HCT116 (cell line): ENCODE measurements at regions of chr12 and their contacts with region 1.

Region 1: DNA sequence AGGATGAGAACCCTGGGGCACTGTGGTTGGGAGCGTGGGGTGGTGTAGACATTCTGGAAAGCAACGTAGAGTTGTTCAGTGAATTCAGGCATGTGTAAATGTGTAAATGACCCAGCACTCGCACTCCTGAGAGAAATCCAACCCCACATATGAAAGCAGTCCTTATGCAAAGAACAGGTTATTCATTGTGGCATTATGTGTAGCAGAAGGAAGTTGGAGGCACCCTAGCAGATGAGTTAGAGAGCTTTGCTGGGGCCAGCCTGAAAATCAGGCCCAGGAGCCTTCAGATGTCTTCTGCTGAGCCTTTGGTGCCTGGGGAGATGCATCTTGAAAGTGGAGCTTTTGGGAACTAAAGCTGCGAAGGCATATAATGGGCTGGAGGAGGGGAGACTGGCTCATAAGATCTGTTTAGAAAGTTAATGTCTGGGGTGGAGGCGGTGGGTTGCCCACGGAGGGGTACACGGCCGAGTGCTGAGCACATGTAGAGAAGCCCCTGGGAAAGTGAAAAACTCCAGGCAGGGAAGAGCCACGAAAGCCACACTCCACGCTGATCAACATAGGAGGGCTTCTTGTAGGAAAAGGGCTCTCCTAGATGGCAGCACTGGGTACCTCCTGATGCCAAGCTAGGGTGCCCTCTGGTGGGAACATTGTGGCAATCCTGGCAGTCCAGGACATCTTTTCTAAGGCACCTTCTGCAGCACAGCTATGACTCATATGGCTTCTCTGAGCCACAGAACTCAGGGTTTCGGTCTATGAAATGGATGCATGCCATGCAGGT is 6.0 kb upstream of the KRT83 start:
- DNase-seq: peak; percentile 96
- ATAC-seq: peak; percentile 99
- H3K4me3 ChIP-seq: no peak overlapping the region; a peak in 1 of 4 replicates
- H3K27ac ChIP-seq: no peak overlapping the region
- H3K4me1 ChIP-seq: peaks cover 0 to 15% of the 10 kb centered on the region in 2 experiments; a peak in 2 of 4 replicates
- H3K27me3 ChIP-seq: no peaks in the 10 kb centered on the region; the same call in 1 of the 2 replicates
- CTCF ChIP-seq: peak; percentile 97 to 100 (median 99)
- POLR2A ChIP-seq: no peak
- RAD21 ChIP-seq: peak; percentile 97

Region 2: GRCh38 chr12:52147367-52147972 is 179.8 kb before region 1 on chr12:
- CTCF ChIA-PET with region 1: interaction called, 19 read pairs
- POLR2A ChIA-PET with region 1: interaction called, 15 read pairs
- RAD21 ChIA-PET with region 1: interaction called, 3 to 5 read pairs
- intact Hi-C with region 1: no loop called
- DNase-seq: peak; percentile 99
- ATAC-seq: peak; percentile 61
- H3K4me3 ChIP-seq: peak overlapping the region; percentile 46 to 55
- H3K27ac ChIP-seq: peak overlapping the region; percentile 100
- H3K4me1 ChIP-seq: peaks cover 83 to 99% of the 10 kb centered on the region in 2 experiments
- H3K27me3 ChIP-seq: no peaks in the 10 kb centered on the region
- CTCF ChIP-seq: no peak
- POLR2A ChIP-seq: no peak
- RAD21 ChIP-seq: no peak

Region 3: DNA sequence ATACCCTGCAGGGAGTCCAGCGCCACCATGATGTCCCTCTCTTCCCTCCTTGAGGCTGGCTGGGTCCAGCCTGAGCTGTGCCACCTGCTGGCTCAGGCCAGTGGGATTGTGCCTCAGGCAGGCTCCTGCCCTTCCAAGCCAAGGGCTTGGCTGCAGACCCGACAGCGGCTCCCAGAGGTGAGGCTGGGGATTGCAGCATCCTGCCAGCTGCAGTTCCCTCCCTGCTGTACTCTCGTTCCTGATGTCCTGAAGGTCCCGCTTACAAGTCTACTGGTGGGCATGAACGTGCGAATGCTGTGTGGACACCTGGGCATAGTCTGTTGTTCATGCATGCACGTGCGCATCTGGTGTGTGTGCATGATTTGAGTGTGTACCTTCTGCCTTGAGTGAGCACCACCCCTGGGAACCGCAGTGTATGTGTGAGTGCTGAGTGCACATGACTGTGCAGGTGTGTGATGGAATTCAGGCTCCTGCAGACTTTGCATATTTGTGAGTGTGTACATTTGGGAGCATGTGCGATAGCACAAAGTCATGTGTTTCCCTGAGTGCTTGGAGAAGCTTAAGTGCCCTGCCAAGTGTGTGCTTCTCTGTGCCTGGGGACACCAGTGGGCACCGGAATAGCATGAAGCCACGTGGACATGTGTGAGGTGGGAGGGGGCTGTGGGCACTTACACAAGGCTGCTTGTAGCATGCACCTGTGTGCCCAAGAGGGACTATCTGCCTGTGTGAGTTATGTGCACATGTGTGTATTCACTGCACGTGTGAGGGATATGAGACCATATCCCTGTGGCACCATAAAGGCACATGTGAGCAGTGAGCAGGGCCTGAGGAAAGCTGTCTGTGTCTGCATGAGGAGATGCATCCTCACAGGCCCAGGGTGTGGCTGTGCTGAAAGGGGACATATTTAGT is 113.5 kb before region 1 on chr12:
- CTCF ChIA-PET with region 1: interaction called, 8 read pairs
- POLR2A ChIA-PET with region 1: no interaction called
- RAD21 ChIA-PET with region 1: interaction called, 3 to 7 read pairs
- intact Hi-C with region 1: loop called (anchors 2 kb)
- DNase-seq: peak; percentile 82
- ATAC-seq: peak; percentile 80
- H3K4me3 ChIP-seq: no peak overlapping the region
- H3K27ac ChIP-seq: no peak overlapping the region
- H3K4me1 ChIP-seq: peaks cover 51 to 77% of the 10 kb centered on the region in 2 experiments
- H3K27me3 ChIP-seq: peaks cover 3% of the 10 kb centered on the region
- CTCF ChIP-seq: peak in 2 of 3 experiments; percentile 99 to 100; a peak in 4 of 6 replicates
- POLR2A ChIP-seq: no peak
- RAD21 ChIP-seq: no peak

Region 4: GRCh38 chr12:52278541-52279421 is 48.5 kb before region 1 on chr12:
- CTCF ChIA-PET with region 1: interaction called, 22 read pairs
- POLR2A ChIA-PET with region 1: interaction called, 6 read pairs
- RAD21 ChIA-PET with region 1: interaction called, 3 to 9 read pairs
- intact Hi-C with region 1: loop called (anchors 1 kb)
- DNase-seq: peak; percentile 57
- ATAC-seq: peak; percentile 81
- H3K4me3 ChIP-seq: peak overlapping the region; percentile 34 to 50
- H3K27ac ChIP-seq: peak overlapping the region; percentile 73
- H3K4me1 ChIP-seq: peaks cover 41 to 65% of the 10 kb centered on the region in 2 experiments
- H3K27me3 ChIP-seq: no peaks in the 10 kb centered on the region
- CTCF ChIP-seq: peak in 2 of 3 experiments; percentile 96 to 99; a peak in 4 of 6 replicates
- POLR2A ChIP-seq: no peak
- RAD21 ChIP-seq: no peak

Region 5: DNA sequence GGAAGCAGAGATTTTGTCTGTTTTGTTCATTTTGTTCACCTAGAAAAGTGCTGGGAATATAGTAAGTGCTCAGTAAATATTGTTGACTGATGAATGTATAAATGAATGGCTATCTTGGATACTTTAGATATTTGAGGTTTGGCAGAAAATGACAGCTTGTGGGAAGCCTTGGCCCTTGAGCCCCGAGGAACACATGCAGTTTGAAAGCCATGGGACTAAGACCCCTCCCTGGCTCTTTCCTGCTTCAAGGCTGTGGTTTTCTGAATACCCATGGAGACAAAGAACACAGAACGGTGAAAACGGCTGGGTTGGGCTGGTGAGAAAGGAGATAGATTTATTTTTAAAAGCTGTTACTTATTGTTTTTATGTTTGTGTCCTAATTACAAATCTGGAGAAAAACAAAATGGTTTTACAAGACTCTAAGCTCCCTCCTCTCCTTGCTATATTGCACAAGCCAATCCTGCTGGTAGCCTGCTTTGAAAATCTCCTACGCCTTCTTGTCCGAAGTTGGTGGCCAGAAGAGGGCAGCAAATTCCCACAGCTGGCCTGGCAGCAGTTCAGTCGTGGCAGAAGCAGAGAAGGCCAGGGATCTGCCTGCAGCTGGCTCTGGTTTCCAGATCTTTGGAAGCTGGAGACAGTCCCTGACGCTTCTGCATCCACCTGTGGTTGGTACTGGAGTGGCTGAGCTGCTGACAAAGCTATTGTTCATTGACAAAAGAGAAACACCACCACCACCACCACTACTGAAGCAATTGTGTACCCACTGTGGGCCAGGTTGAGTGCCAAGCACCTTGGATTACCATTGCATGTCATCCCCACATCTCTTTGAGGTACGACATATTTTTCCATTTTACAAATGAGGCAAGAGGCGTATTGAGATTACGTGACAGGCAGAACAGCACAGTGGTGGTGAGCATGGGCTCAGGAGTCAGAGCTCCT is 45.2 kb after region 1 on chr12:
- CTCF ChIA-PET with region 1: interaction called, 12 read pairs
- POLR2A ChIA-PET with region 1: no interaction called
- RAD21 ChIA-PET with region 1: no interaction called
- intact Hi-C with region 1: no loop called
- DNase-seq: peak; percentile 79
- ATAC-seq: peak; percentile 96
- H3K4me3 ChIP-seq: no peak overlapping the region
- H3K27ac ChIP-seq: no peak overlapping the region
- H3K4me1 ChIP-seq: peaks cover 0 to 2% of the 10 kb centered on the region in 2 experiments; a peak in 1 of 4 replicates
- H3K27me3 ChIP-seq: no peaks in the 10 kb centered on the region
- CTCF ChIP-seq: peak; percentile 82 to 97 (median 84)
- POLR2A ChIP-seq: no peak
- RAD21 ChIP-seq: peak; percentile 96

Region 6: DNA sequence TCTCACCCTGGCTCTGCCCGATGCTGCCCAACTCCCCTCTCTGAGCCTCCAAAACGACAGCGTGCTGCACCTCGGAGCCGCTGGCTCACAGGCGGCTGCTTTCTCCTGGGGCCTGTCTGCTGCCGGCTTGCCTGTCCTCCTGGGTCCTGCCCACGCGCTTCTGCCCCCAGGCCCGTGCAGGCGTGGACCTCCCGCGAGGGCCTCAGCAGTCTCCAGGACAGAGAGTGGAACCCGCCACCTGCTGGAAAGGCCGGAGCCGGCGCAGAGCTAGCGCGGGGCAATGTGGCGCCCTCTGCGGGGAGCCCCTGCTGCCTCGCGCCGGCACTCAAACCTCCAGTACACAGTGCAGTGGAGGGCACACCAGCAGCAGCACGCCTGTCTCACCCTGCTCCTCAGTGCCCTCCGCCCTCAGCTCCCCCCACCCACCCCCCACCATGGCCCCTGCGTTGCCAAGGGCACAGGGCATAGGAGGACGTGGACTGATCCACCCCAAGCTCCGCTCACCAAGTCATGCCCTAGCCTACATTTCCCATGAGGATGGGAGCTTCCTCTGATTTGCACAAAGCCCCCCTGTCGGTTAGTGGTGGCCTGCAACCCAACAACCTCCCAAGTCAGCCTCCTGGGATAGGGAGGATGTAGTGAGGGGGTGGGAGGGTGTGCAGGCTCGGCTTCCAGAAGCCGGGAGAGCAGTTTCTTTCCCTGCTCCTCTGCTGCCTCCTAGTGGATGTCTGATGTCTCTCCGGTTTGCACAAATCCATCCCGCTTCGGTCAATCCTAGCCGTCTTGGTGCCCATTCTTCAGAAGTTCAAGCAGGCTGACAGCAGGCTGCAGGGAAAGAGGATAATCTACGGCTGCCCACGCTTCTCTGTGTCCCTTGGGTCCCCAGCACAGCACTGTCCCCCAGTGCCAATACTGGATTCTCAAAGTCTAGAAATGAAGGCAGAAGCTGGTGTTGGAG is 552.4 kb after region 1 on chr12:
- CTCF ChIA-PET with region 1: interaction called, 23 read pairs
- POLR2A ChIA-PET with region 1: no interaction called
- RAD21 ChIA-PET with region 1: no interaction called
- intact Hi-C with region 1: loop called (anchors 5 kb)
- DNase-seq: peak; percentile 86
- ATAC-seq: peak; percentile 87
- H3K4me3 ChIP-seq: peak overlapping the region; percentile 30 to 49
- H3K27ac ChIP-seq: peak overlapping the region; percentile 44
- H3K4me1 ChIP-seq: peaks cover 33 to 61% of the 10 kb centered on the region in 2 experiments
- H3K27me3 ChIP-seq: no peaks in the 10 kb centered on the region
- CTCF ChIP-seq: peak in 2 of 3 experiments; percentile 76 to 95; a peak in 4 of 6 replicates
- POLR2A ChIP-seq: no peak
- RAD21 ChIP-seq: no peak